Activated CD4-positive, alpha-beta T cell treated with anti-CD3 and anti-CD28 coated beads, Interleukin-2, amount 10 ng/mL, durations not matched to agents 24 days and 14 days (primary cell): ENCODE measurements at regions of chr1 and their contacts with region 1.

Region 1: GRCh38 chr1:147618077-147618569 is 52.2 kb downstream of the ACP6 start:
- DNase-seq: peak; percentile 87
- H3K4me3 Mint-ChIP-seq: peak overlapping the region; percentile 47
- H3K27ac Mint-ChIP-seq: peak overlapping the region; percentile 61
- H3K4me1 Mint-ChIP-seq: peaks cover 33% of the 10 kb centered on the region
- H3K27me3 Mint-ChIP-seq: no peaks in the 10 kb centered on the region

Region 2: GRCh38 chr1:147545133-147545532 is 73.0 kb before region 1 on chr1:
- intact Hi-C with region 1: loop called (anchors 1 kb)
- DNase-seq: peak; percentile 90
- H3K4me3 Mint-ChIP-seq: peak overlapping the region; percentile 77
- H3K27ac Mint-ChIP-seq: peak overlapping the region; percentile 84
- H3K4me1 Mint-ChIP-seq: peaks cover 51% of the 10 kb centered on the region
- H3K27me3 Mint-ChIP-seq: no peaks in the 10 kb centered on the region